ENCODE measurements at regions of chr13 and their contacts with region 1.

Region 1: DNA sequence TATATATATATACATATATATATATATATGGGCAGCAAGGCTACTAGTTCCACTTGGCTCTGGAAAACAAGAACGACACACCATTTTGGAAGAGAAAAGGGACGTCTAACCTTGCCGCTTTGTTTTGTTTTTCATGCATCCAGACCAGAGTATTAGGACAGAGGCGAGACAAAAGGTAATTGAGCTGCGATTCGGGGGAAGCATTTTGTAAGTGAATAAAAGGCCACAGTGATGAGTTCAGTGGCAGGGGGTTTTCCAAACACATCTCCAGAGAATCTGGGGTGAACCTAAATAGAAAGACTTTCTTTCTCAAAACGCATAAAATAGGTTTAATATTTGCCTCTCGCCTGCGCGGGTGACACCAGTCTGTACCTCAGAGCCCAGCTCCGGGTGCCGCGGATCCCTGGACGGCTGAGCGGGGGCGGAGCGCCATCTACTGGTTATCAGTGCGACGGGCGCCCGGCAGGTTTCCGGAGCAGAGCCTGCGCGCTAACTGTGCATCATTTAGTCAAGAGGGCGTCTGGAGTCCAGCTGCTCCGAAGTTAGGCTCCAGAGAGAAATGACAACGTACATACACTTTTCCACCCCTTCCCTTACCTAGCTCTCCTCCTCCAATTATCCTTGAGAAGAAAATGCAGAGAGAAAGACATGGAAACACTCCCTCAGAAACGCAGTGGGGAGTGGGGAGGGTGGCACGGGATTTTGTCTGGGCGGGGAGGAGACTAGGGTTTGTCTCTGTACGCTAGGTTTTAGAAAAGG is 262.3 kb downstream of the TBC1D4 start:
- DNase-seq: peak in 1 of 2 experiments; percentile 76
- H3K4me3 ChIP-seq: no peak overlapping the region
- H3K27ac ChIP-seq: no peak overlapping the region
- H3K4me1 ChIP-seq: no peaks in the 10 kb centered on the region
- H3K27me3 ChIP-seq: no peaks in the 10 kb centered on the region
- CTCF ChIP-seq: peak; percentile 92

Region 2: DNA sequence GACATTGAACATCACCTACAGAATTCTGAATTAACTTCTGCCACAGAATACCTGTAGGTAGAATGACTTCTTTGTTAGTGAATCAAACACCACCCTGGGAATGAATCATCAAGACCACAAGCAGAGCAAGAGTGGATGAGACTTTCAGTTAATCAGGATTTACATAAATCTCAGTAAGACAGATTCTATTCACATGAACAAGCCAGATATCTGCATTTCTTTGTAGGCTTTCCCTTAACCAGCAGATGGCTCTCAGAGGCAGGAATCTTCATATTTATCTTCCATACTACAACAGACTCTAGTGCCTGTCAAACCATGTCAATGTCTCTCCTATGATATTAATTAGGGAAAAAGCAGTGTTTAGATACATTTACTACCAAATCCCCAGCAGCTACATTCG is 1497.5 kb before region 1 on chr13:
- CTCF ChIA-PET with region 1: no interaction called
- POLR2A ChIA-PET with region 1: no interaction called
- intact Hi-C with region 1: loop called (anchors 1 kb)
- DNase-seq: peak in 1 of 2 experiments; percentile 66
- H3K4me3 ChIP-seq: no peak overlapping the region
- H3K27ac ChIP-seq: no peak overlapping the region
- H3K4me1 ChIP-seq: no peaks in the 10 kb centered on the region; the same call in 1 of the 2 replicates
- H3K27me3 ChIP-seq: no peaks in the 10 kb centered on the region
- CTCF ChIP-seq: no peak; the same call in 1 of the 2 replicates

Region 3: DNA sequence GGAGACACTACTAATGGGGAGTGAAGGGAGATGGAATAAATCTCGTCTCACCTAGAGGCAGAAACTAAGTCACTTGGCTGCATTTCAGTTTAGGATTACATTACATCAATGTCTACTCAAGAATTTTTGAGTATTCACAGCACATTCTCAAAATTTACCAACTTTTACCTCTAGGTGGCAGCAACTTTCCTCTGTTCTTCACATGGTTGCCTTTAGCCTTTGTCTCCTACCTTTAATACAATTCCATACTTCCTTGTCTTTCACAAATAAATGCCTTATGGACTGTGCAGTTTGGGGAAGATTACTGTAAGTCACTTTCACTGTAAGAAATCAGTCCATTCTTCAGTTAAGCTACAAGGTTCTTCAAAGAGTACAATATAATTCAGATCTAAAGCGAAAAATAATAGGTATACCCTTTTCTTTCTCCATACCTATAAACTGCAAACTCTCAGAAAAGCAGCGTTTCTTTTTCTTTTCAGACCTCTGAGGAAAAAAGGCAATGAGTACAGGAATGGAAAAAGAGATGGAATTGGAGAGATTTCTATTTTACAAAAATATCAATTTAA is 1464.8 kb before region 1 on chr13:
- CTCF ChIA-PET with region 1: no interaction called
- POLR2A ChIA-PET with region 1: no interaction called
- intact Hi-C with region 1: loop called (anchors 2 kb)
- DNase-seq: peak; percentile 25 to 52
- H3K4me3 ChIP-seq: no peak overlapping the region
- H3K27ac ChIP-seq: no peak overlapping the region
- H3K4me1 ChIP-seq: no peaks in the 10 kb centered on the region
- H3K27me3 ChIP-seq: no peaks in the 10 kb centered on the region
- CTCF ChIP-seq: peak; percentile 83

Region 4: DNA sequence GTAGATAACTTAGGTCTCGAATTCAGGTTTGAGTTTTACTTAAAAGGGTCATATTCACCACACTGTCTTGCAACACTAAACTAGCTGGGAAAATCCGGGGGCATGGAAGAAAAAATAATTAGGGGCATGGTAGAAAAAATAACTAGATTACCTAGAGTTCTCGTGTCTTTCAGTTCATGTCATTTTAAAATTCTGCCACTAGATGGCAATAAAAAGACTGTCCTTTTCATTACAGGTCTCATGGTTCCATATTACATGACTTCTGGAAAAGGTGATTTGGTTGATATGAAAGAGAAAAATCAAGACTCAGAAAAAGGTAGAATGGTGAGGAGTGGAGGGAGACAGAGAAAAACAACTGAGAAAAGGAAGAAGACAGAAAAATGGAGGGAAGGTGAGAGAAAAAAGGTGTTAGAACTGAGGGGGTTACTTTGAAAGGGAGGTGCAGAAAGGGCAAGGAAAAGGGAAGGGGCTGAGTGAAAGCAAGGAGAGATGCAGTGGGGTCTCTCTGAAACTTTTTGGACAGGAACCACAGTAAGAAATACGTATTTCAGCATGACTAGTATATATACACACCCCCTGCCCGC is 1384.4 kb before region 1 on chr13:
- CTCF ChIA-PET with region 1: no interaction called
- POLR2A ChIA-PET with region 1: no interaction called
- intact Hi-C with region 1: loop called (anchors 10 kb)
- DNase-seq: no peak
- H3K4me3 ChIP-seq: no peak overlapping the region
- H3K27ac ChIP-seq: no peak overlapping the region
- H3K4me1 ChIP-seq: no peaks in the 10 kb centered on the region
- H3K27me3 ChIP-seq: no peaks in the 10 kb centered on the region
- CTCF ChIP-seq: peak; percentile 79

Region 5: DNA sequence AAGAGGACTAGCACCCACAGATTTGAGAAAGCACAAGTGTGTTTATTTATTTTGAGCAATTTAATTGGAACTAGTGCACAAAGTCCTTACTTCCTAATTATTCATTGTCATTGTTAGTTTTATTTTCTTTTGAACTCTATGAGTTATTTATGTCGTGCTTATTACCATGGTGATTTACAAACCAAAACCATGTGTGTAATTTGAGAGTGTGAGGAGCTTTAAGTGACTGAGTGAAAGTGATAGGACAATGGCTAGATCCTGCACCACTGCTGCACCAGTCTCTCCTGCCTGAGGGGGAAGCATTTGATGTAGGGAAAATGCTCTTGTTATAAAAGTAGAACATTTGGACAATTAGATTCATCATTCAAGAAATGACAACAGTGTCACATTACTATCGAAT is 913.2 kb before region 1 on chr13:
- CTCF ChIA-PET with region 1: no interaction called
- POLR2A ChIA-PET with region 1: no interaction called
- intact Hi-C with region 1: no loop called
- DNase-seq: no peak
- H3K4me3 ChIP-seq: no peak overlapping the region
- H3K27ac ChIP-seq: no peak overlapping the region
- H3K4me1 ChIP-seq: no peaks in the 10 kb centered on the region
- H3K27me3 ChIP-seq: no peaks in the 10 kb centered on the region
- CTCF ChIP-seq: no peak

Region 6: DNA sequence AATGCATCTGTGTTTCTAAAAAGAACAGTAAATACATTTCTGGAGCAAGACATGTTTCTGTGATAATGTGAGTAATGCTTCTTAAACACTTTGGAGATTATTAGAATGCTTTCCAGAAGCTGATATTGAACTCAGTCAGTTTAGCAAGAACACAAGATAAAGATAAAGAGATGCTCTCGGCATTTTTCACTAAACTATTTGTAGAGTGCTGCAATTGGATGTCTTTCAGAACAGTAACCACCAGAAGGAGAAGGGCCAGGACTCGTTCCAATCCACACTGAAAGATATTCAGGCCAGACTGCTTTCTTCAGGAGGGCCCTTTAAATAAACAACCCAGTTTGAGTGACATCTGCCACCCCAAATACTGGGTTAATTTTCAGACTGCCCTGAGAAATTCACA is 193.7 kb before region 1 on chr13:
- CTCF ChIA-PET with region 1: no interaction called
- POLR2A ChIA-PET with region 1: no interaction called
- intact Hi-C with region 1: no loop called
- DNase-seq: no peak
- H3K4me3 ChIP-seq: no peak overlapping the region
- H3K27ac ChIP-seq: no peak overlapping the region
- H3K4me1 ChIP-seq: no peaks in the 10 kb centered on the region
- H3K27me3 ChIP-seq: no peaks in the 10 kb centered on the region
- CTCF ChIP-seq: no peak